ENCODE measurements at regions of chr16 and their contacts with region 1.

Region 1: GRCh38 chr16:66406534-66407221 is 20.4 kb upstream of the BEAN1 start:
- DNase-seq: peak; percentile 92
- ATAC-seq: peak; percentile 90

Region 2: DNA sequence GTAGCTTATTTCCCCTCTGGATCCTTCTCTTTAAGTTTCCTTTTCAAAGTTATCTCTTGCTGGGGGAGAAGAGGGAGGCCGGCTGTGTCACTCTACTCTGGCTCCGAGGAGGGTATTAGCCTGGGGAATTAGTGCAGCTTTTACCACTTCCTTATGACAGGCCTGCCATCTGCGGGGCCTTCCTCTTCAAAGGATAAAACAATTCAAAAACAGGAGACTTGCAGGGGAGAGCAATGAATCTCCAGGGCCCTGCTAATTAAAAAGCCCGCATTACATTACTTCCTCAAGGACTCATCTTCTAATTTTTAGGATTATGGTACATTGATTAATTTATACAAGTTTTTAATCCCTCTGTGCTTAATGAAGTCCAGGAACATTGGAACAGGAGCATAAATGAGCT is 231.0 kb before region 1 on chr16:
- intact Hi-C with region 1: no loop called
- DNase-seq: no peak
- ATAC-seq: no peak

Region 3: DNA sequence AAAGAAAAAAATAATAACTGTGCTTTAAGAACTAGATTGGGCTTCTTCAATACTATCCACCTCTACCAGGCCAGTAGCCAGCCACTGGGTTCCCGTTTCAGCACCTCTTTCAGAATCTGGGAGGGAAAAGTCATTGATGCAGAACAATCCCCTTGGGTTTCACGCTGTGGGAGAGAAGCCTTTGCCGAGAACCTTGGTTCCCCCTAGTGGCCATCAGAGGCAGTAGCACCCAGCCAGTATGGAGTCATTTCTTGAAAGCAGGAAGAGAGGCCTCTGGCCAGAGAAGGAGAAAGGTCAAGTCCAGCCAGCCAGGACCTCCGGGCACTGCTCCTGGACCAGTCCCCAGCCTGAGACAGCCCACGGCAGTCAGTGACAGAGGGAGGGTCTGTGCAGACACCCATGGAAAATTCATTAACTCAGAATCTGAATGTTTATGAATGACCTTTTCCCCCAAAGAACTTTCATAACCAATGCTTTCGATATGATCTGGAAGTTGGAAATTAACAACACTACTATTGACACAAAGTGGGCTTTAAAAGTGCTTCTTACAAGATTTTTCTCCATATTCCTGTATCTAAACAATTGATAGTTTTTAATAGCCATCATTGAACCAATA is 91.4 kb before region 1 on chr16:
- intact Hi-C with region 1: no loop called
- DNase-seq: peak; percentile 61
- ATAC-seq: peak; percentile 96

Region 4: GRCh38 chr16:66483689-66484481 is 77.2 kb after region 1 on chr16:
- intact Hi-C with region 1: loop called (anchors 2 kb)
- DNase-seq: peak; percentile 88
- ATAC-seq: peak; percentile 82

Region 5: GRCh38 chr16:66608241-66609138 is 201.8 kb after region 1 on chr16:
- intact Hi-C with region 1: loop called (anchors 5 kb)
- DNase-seq: peak; percentile 93
- ATAC-seq: peak; percentile 61